ENCODE measurements at regions of chr6 and their contacts with region 1.

Region 1: DNA sequence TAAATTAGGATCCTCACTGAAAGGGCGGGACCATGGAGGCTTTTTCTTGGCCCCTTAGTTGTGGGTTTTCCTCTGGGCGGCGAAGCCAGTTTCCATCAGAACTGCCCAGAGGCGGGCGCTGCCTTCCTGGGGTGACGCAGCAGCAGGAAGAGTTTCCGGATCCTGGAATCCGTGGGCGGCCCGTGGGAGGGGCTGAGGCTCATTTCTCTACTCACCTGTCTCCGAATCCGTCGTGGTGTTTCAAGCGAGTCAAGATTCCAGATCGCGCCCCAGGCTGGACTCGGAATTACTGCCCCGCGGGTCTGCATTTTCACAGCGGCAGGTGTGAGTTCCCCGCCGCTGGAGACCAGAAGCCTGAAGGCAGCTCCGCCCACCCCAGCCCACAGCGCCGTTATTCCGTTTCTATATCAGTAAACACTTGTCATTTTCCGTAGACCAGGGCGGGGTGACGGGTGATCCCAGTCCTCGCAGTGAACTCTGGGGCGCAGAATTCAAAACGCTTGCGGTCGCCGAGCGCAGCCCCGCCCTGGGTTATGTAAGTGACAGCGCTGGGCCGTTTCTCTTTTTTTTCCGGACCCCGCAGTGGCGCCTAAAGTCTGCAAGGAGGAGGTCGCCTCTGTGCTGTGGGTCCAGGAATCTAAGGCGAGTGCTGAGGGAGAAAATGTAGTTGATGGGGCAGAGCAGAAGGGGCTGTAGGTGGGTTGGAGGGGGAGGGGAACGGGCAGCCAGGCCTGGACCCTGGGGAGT is 27.2 kb upstream of the POU5F1 start:
- DNase-seq: peak; percentile 94
- H3K4me3 ChIP-seq: peak overlapping the region; percentile 91
- H3K27ac ChIP-seq: peak overlapping the region; percentile 97
- H3K4me1 ChIP-seq: peaks cover 48% of the 10 kb centered on the region
- CTCF ChIP-seq: no peak

Region 2: DNA sequence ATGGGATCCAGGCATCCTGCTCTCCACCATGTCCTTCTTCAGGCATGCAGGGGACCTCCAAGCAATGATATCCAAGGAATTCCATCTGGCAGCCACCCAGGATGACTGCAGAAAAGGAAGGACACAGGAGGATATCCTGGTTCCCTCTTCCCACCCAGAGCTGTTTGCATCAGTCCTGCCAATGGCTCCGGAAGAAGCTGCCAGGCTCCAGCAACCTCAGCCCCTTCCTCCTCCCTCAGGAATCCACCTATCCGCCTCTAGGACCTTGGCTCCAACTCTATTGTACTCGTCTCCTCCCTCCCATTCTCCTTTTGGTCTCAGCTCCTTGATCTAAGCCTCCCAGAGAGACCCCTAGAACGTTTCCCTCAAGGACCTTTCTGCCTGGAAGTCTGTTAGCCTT is 58.1 kb before region 1 on chr6:
- CTCF ChIA-PET with region 1: interaction called, 5 read pairs
- POLR2A ChIA-PET with region 1: no interaction called
- intact Hi-C with region 1: loop called (anchors 1 kb)
- DNase-seq: no peak
- H3K4me3 ChIP-seq: no peak overlapping the region
- H3K27ac ChIP-seq: no peak overlapping the region
- H3K4me1 ChIP-seq: peaks cover 6% of the 10 kb centered on the region
- CTCF ChIP-seq: no peak

Region 3: DNA sequence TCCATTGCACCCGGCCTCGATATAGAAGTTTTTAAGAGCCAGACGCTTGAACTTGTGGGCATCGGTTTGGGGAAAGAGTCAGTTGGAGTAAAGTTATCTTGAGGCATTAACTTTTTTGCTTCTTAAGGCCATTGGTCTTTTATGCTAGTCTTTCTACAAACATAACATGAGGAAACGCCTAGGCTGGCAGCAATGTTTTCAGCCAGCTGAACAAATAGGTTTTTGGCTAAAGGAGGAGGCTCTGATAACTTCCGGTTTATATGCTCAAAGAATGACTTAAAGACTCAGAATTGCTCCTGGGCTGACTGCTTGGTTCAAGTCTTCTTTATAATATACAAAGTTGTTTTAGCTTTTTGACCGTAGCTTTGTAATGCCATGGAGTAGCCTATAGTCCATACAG is 28.0 kb after region 1 on chr6:
- CTCF ChIA-PET with region 1: no interaction called
- POLR2A ChIA-PET with region 1: interaction called, 3 read pairs
- intact Hi-C with region 1: loop called (anchors 1 kb)
- DNase-seq: no peak
- H3K4me3 ChIP-seq: no peak overlapping the region
- H3K27ac ChIP-seq: no peak overlapping the region
- H3K4me1 ChIP-seq: peaks cover 68% of the 10 kb centered on the region
- CTCF ChIP-seq: no peak

Region 4: DNA sequence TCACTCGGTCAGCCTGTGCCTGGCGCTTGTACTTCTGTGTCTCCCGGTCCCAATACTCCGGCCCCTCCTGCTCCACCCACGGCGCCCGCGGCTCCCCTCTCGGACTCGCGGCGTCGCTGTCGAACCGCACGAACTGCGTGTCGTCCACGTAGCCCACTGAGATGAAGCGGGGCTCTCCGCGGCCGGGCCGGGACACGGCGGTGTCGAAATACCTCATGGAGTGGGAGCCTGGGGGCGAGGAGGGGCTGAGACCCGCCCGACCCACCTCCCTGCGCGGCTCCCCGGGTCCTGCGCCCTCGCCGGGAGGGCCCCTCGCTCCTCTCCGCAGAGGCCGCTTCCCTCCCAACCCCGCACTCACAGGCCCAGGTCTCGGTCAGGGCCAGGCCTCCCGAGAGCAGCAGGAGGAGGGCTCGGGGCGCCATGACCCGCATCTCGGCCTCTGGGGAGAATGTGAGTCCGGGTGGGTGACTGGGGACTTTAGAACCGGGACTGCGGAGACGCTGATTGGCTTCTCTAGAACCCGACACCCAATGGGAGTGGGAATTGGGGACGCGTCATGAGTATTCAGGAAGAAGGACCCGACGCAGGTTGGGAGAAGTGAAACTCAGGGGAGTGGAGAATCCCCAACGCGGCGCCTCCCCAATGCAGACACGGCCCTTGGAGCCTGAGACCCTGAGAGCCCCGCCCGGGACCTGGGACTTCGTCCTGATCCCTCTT is 74.1 kb after region 1 on chr6 and contains the start of gene HLA-C:
- CTCF ChIA-PET with region 1: interaction called, 3 read pairs
- POLR2A ChIA-PET with region 1: no interaction called
- intact Hi-C with region 1: loop called (anchors 1 kb)
- DNase-seq: peak; percentile 97
- H3K4me3 ChIP-seq: peak within 1 kb of the TSS; percentile 91
- H3K27ac ChIP-seq: peak within 1 kb of the TSS; percentile 61
- H3K4me1 ChIP-seq: peaks cover 55% of the 10 kb centered on the region
- CTCF ChIP-seq: no peak
- total RNA-seq, gene HLA-C: 333 and 406 TPM in 2 replicates

Region 5: GRCh38 chr6:31332637-31333602 is 135.2 kb after region 1 on chr6:
- CTCF ChIA-PET with region 1: no interaction called
- POLR2A ChIA-PET with region 1: no interaction called
- intact Hi-C with region 1: loop called (anchors 1 kb)
- DNase-seq: peak; percentile 70
- H3K4me3 ChIP-seq: no peak overlapping the region
- H3K27ac ChIP-seq: peak overlapping the region; percentile 40
- H3K4me1 ChIP-seq: peaks cover 16% of the 10 kb centered on the region
- CTCF ChIP-seq: peak; percentile 39; the same call in 1 of the 2 replicates

Region 6: DNA sequence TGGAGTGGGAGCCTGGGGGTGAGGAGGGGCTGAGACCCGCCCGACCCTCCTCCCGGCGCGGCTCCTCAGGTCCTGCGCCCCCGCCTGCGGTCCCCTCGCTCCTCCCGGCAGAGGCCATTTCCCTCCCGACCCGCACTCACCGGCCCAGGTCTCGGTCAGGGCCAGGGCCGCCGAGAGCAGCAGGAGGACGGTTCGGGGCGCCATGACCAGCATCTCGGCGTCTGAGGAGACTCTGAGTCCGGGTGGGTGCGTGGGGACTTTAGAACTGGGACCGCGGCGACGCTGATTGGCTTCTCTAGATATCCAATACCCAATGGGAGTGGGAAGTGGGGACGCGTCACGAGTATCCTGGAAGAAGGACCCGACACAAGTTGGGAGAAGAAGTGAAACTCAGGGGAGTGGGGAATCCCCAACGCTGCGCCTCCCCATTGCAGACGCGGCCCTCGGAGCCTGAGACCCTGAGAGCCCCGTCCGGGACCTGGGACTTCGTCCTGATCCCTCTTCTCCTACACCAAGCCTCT is 159.3 kb after region 1 on chr6 and contains the start of gene HLA-B:
- CTCF ChIA-PET with region 1: no interaction called
- POLR2A ChIA-PET with region 1: no interaction called
- intact Hi-C with region 1: loop called (anchors 1 kb)
- DNase-seq: peak; percentile 90
- H3K4me3 ChIP-seq: peak within 1 kb of the TSS; percentile 95
- H3K27ac ChIP-seq: peak within 1 kb of the TSS; percentile 51
- H3K4me1 ChIP-seq: peaks cover 55% of the 10 kb centered on the region
- CTCF ChIP-seq: no peak
- total RNA-seq, gene HLA-B: 223 and 258 TPM in 2 replicates

Region 7: GRCh38 chr6:31366693-31367470 is 169.2 kb after region 1 on chr6:
- CTCF ChIA-PET with region 1: interaction called, 8 read pairs
- POLR2A ChIA-PET with region 1: interaction called, 7 read pairs
- intact Hi-C with region 1: loop called (anchors 1 kb)
- DNase-seq: peak; percentile 88
- H3K4me3 ChIP-seq: peak overlapping the region; percentile 66
- H3K27ac ChIP-seq: no peak overlapping the region
- H3K4me1 ChIP-seq: peaks cover 12% of the 10 kb centered on the region
- CTCF ChIP-seq: peak; percentile 93